ENCODE measurements at regions of chr4 and their contacts with region 1.

Region 1: DNA sequence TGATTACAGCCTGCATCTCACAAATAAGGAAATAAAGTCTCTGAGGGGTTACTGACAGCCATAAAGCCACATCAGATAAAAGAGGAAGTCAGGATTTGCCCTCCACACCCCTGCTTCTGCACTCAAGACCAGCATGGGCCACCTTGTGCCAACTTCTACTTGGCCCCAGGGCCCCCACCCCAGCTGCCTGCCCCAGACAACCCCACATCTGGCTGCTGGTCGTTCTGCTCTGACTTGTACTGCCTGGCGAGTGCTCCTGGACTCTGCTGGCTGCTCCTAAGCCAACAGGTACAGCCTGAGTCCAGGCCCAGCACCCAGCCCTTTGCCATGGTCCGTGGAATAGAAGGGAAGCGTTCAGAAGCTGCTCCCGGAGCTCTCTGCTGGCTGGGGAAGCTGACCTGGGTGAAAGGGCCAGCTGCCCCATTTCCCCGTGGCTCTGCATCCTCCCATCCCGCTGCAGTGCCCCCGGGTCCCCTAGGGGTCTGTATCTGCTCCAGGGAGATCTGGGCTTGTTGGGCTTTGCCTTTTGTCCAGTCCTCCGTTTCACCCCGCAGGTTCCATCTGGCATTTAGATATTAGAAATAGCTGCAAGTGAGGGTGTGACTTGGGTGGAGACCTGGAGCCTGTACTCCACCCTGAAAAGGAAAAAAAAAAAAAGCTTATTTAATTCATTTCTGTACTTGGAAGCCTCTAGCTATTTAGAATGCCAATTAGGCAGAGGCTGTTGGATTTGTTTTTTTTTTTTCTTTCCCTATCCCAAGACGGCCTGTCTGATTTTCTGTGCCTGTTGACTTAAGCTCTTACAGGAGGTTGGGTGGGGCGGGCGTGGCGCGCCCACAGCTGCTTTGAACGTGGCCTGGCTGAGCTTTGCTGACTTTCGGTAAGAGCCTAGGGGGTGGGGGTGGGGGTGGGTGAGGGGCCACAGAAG is 194.7 kb downstream of the PTTG2 start:
- DNase-seq: peak; percentile 60
- ATAC-seq: peak; percentile 83
- H3K4me3 ChIP-seq: peak overlapping the region in 1 of 5 experiments; percentile 4
- H3K4me3 Mint-ChIP-seq: peak overlapping the region; percentile 72
- H3K27ac ChIP-seq: no peak overlapping the region
- H3K27ac Mint-ChIP-seq: peak overlapping the region; percentile 27
- H3K4me1 ChIP-seq: peaks cover 18 to 25% of the 10 kb centered on the region in 2 donors
- H3K4me1 Mint-ChIP-seq: peaks cover 26% of the 10 kb centered on the region
- H3K27me3 ChIP-seq: no peaks in the 10 kb centered on the region
- H3K27me3 Mint-ChIP-seq: no peaks in the 10 kb centered on the region
- CTCF ChIP-seq: no peak

Region 2: DNA sequence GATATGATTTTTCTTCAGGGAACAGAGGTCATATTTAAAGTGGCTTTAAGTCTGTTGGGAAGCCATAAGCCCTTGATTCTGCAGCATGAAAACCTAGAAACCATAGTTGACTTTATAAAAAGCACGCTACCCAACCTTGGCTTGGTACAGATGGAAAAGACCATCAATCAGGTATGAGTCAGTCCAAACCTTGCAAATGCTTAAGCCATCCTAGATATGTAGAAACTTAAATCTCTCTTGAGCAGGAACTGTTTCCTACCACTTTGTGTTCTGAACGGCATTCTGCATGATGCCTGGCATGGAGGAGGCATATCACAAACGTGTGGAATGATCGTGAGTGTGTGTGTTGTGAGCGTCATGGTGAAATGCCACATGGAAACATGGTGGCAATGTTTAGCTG is 30.0 kb before region 1 on chr4:
- CTCF ChIA-PET with region 1: no interaction called
- POLR2A ChIA-PET with region 1: no interaction called
- intact Hi-C with region 1: loop called (anchors 1 kb)
- DNase-seq: no peak
- ATAC-seq: no peak
- H3K4me3 ChIP-seq: no peak overlapping the region
- H3K4me3 Mint-ChIP-seq: no peak overlapping the region
- H3K27ac ChIP-seq: no peak overlapping the region
- H3K27ac Mint-ChIP-seq: no peak overlapping the region
- H3K4me1 ChIP-seq: peaks cover 6 to 16% of the 10 kb centered on the region in 2 donors
- H3K4me1 Mint-ChIP-seq: peaks cover 20% of the 10 kb centered on the region
- H3K27me3 ChIP-seq: no peaks in the 10 kb centered on the region
- H3K27me3 Mint-ChIP-seq: no peaks in the 10 kb centered on the region
- CTCF ChIP-seq: no peak

Region 3: GRCh38 chr4:38132107-38132673 is 22.8 kb before region 1 on chr4:
- CTCF ChIA-PET with region 1: interaction called, 3 read pairs
- POLR2A ChIA-PET with region 1: no interaction called
- intact Hi-C with region 1: loop called (anchors 2 kb)
- DNase-seq: peak; percentile 61
- ATAC-seq: peak; percentile 77
- H3K4me3 ChIP-seq: no peak overlapping the region
- H3K4me3 Mint-ChIP-seq: peak overlapping the region; percentile 48
- H3K27ac ChIP-seq: peak overlapping the region in 1 of 2 donors; percentile 53
- H3K27ac Mint-ChIP-seq: peak overlapping the region; percentile 88
- H3K4me1 ChIP-seq: peaks cover 11 to 28% of the 10 kb centered on the region in 2 donors
- H3K4me1 Mint-ChIP-seq: peaks cover 48% of the 10 kb centered on the region
- H3K27me3 ChIP-seq: no peaks in the 10 kb centered on the region
- H3K27me3 Mint-ChIP-seq: no peaks in the 10 kb centered on the region
- CTCF ChIP-seq: no peak

Region 4: GRCh38 chr4:38190717-38191178 is 35.8 kb after region 1 on chr4:
- CTCF ChIA-PET with region 1: no interaction called
- POLR2A ChIA-PET with region 1: no interaction called
- intact Hi-C with region 1: no loop called
- DNase-seq: no peak
- ATAC-seq: no peak
- H3K4me3 ChIP-seq: no peak overlapping the region
- H3K4me3 Mint-ChIP-seq: no peak overlapping the region
- H3K27ac ChIP-seq: no peak overlapping the region
- H3K27ac Mint-ChIP-seq: no peak overlapping the region
- H3K4me1 ChIP-seq: no peaks in the 10 kb centered on the region
- H3K4me1 Mint-ChIP-seq: no peaks in the 10 kb centered on the region
- H3K27me3 ChIP-seq: no peaks in the 10 kb centered on the region
- H3K27me3 Mint-ChIP-seq: peaks cover 13% of the 10 kb centered on the region
- CTCF ChIP-seq: no peak